PC-9 (cell line): ENCODE measurements at regions of chr1 and their contacts with region 1.

Region 1: DNA sequence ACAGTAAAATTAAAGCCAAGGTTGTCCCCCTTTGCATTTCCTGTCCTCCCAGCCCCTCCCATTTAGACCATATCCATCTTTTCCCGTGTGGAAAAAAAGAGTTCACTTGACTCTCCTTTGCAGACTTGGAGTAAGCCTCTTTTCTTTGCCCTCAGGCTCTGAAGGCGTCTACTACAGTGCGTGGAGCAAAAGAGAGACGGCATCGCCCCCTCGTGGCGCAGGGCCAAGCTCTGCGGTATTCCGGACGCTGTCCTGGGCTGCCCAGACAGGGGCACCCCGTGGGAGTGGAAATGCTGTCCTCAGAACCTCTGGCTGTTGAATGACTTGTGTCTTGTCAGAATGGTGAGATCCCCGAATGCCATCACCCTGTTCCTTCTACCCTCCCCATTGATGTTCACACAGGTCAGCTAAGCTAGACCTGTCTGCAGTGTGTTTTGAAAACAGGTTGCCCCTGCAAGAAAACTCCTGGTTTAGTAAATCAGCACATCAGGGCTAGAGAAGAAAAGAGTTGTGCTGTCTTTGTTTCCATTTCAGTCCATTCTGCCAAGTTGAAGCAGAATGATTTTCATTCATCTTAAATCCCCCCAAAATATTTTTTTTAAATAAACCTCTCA is 12.3 kb upstream of the GJA8 start:
- DNase-seq: peak; percentile 72 to 84
- H3K4me3 ChIP-seq: no peak overlapping the region
- H3K27ac ChIP-seq: peak overlapping the region; percentile 48; the same call in 1 of the 2 replicates
- H3K4me1 ChIP-seq: peaks cover 18% of the 10 kb centered on the region
- H3K27me3 ChIP-seq: no peaks in the 10 kb centered on the region
- CTCF ChIP-seq: peak; percentile 96

Region 2: DNA sequence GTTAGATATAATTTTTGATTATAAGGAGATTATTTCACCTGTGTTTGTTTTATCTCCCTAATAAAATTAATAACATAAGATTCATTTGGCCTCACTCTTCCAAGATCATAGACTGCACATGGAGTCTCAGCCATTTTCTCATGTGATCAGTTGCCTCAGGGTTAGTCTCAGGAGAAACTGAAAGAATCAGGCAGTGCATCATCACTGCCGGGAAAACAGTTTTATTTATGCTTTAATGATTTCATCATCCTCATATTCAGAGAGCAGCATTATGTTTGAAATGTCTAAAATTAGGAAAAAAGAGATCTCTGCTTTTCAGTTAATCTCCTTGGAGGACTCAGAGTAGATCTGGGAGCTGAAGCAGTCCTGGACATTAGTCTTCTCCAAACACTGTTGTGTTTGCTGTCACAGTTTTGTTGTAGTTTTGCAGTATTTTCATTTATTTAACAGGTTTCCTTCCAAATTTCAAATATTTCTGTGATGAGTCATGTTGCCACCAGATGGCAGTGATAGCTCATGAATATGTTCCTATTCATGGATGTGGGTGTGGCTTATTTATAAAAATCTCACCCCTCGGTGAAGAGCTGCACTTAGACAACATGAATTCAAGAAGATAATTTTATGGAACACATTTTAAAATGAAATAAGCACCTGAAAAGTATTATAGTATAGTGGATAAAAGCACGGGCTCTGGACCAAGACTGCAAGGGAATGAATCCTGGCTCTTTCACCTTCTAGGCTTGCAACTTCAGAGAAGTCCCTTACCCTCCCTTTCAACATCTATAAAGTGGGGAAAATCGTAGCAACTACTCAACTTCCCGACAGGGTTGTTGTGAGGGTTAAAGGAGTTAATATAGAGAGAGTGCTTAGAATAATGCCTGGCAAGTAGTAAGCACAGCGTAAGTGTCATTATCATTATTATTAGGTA is 616.6 kb before region 1 on chr1:
- CTCF ChIA-PET with region 1: interaction called, 6 read pairs
- POLR2A ChIA-PET with region 1: no interaction called
- intact Hi-C with region 1: loop called (anchors 1 kb)
- DNase-seq: peak; percentile 13 to 69
- H3K4me3 ChIP-seq: no peak overlapping the region
- H3K27ac ChIP-seq: peak overlapping the region; percentile 89
- H3K4me1 ChIP-seq: peaks cover 12% of the 10 kb centered on the region
- H3K27me3 ChIP-seq: no peaks in the 10 kb centered on the region
- CTCF ChIP-seq: peak; percentile 62

Region 3: DNA sequence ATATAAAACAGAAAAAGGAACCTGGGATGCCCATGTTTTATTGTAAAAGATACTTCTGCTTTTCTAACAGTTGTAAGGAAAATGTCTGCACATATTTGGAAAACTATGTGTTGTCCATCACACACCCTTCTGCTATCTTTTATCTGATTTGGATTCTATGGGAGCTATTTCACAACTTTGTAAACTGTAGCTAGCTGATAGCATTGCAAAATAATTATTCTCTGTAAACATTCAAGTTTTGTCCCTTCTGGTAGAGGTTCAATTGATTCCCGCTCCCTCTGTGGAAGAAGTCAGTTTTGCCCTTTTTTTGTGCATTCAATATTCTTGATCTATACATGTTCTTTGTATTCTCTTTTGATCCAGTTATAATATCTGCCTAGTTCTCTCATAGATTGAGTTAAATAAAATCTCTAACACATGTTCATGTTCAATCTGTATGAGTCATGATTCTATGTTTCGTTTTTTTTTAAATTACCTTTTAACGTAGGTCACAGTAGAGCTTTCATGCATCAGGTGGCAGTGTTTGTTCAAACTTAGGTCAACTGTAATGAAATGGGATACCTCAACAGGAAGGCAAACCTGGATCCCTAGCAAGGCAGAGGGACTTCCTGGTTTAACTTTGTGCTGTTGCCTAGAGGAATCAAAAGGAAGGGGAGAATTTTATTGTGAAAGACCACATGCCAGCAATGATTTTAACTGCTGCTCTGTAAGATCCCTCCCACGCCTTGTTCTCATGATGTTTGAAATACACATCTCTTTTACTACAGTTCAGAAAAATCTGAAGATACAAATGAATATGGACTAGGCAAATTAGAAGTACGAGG is 375.0 kb before region 1 on chr1:
- CTCF ChIA-PET with region 1: no interaction called
- POLR2A ChIA-PET with region 1: interaction called, 3 read pairs
- intact Hi-C with region 1: loop called (anchors 1 kb)
- DNase-seq: peak; percentile 48 to 99
- H3K4me3 ChIP-seq: peak overlapping the region; percentile 39
- H3K27ac ChIP-seq: peak overlapping the region; percentile 73
- H3K4me1 ChIP-seq: peaks cover 39% of the 10 kb centered on the region
- H3K27me3 ChIP-seq: no peaks in the 10 kb centered on the region
- CTCF ChIP-seq: peak; percentile 64

Region 4: DNA sequence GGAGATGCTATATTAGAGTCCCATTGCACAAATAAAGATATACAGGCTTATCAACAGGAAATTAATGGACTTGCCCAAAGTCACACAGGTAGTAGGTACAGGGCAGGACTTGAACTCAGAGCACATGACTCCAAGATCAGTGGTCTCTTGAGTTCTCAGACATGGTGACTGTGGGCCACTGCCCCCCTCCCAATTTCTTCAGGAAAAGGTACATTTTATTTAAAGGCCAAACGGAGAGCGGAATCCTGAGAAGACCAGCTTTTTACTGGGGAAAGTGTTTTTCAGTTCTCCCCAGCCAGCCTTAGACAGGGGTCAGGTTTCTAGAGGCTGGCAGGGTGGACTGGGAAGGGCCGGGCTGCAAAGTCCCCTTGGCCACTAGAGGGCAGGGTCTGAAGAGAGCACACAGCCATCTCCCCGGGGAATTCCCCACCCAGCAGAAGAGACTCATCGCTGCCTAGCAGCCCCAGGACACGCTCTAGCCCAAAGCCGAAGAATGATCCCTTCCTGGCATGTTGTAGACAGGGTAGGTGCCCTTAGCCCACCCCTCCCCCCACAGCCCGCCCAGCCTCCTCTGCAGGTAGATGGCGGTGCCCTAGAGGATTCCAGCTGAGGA is 249.6 kb before region 1 on chr1:
- CTCF ChIA-PET with region 1: interaction called, 6 read pairs
- POLR2A ChIA-PET with region 1: no interaction called
- intact Hi-C with region 1: loop called (anchors 1 kb)
- DNase-seq: peak in 1 of 2 experiments; percentile 69
- H3K4me3 ChIP-seq: no peak overlapping the region
- H3K27ac ChIP-seq: no peak overlapping the region
- H3K4me1 ChIP-seq: peaks cover 8% of the 10 kb centered on the region; the same call in 1 of the 2 replicates
- H3K27me3 ChIP-seq: no peaks in the 10 kb centered on the region
- CTCF ChIP-seq: peak; percentile 83

Region 5: DNA sequence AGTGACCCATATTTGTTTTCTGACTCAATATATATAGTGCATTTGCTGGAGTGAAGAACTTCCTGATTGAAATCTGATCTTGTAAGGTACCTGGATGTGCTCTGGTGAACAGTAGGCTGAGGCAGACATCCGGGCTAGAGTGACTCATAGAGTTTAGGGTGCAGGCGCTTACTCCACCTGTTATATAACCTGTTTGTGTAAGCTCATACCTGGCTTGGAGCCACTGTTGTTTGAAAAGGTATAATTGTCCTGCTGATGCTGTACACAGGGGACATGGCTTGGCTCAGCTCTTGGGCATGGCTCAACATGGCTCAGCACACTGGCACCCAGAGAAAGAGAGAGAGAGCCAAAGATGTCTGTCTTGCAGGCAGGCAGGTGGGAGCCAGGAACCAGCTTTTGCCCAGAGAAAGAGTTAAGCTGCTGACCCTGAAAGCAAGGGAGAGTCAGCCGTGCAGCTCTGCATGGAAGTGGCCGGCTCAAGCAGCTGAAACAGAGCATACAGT is 173.2 kb before region 1 on chr1:
- CTCF ChIA-PET with region 1: no interaction called
- POLR2A ChIA-PET with region 1: no interaction called
- intact Hi-C with region 1: loop called (anchors 1 kb)
- DNase-seq: peak; percentile 82 to 100
- H3K4me3 ChIP-seq: no peak overlapping the region
- H3K27ac ChIP-seq: peak overlapping the region; percentile 82
- H3K4me1 ChIP-seq: peaks cover 73% of the 10 kb centered on the region
- H3K27me3 ChIP-seq: no peaks in the 10 kb centered on the region
- CTCF ChIP-seq: no peak

Region 6: DNA sequence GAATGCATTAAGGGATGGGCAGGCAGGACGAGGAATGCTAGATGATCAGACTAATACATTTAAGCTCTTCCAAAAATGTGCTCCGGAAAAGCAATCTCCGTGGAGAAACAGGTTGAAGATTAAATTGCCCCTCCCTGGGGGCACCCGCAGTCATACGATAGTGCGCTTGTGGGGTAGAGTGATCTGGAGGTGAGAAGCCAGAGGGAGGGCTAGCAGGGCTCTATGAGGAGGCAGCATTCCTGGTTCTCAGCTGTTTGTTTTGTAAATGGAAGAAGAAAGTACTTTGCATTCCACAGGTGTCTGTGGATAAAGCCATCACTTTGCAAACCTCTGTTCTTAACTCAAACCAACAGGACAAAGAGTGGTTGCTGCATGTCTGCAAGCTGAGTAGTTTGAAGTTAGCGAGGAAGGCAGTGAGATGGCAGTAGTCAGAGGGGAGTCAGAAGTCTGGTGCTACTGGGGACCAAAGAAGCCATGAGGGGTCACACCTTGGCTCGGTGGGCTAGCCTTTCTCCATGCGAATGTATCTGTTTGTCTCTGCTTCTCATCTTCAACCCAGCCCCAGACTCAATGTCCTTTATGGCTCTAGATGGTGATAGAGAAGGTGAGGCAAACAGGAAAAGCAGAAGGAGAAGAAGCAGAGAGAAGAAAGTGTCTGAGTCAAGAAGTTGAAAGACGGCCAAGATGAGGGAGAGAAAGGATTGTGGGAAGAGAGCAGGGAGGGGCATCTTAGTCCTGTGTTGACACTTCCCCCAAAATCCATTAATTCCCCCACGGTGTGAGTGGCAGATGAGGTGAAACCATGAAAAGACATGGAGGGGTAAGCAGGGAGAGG is 52.9 kb before region 1 on chr1:
- CTCF ChIA-PET with region 1: no interaction called
- POLR2A ChIA-PET with region 1: no interaction called
- intact Hi-C with region 1: loop called (anchors 1 kb)
- DNase-seq: peak in 1 of 2 experiments; percentile 37
- H3K4me3 ChIP-seq: no peak overlapping the region
- H3K27ac ChIP-seq: peak overlapping the region; percentile 91
- H3K4me1 ChIP-seq: peaks cover 65% of the 10 kb centered on the region
- H3K27me3 ChIP-seq: no peaks in the 10 kb centered on the region
- CTCF ChIP-seq: no peak